Adrenal gland (tissue), 19 donors: ENCODE measurements at regions of chr1 and their contacts with region 1.

Region 1: DNA sequence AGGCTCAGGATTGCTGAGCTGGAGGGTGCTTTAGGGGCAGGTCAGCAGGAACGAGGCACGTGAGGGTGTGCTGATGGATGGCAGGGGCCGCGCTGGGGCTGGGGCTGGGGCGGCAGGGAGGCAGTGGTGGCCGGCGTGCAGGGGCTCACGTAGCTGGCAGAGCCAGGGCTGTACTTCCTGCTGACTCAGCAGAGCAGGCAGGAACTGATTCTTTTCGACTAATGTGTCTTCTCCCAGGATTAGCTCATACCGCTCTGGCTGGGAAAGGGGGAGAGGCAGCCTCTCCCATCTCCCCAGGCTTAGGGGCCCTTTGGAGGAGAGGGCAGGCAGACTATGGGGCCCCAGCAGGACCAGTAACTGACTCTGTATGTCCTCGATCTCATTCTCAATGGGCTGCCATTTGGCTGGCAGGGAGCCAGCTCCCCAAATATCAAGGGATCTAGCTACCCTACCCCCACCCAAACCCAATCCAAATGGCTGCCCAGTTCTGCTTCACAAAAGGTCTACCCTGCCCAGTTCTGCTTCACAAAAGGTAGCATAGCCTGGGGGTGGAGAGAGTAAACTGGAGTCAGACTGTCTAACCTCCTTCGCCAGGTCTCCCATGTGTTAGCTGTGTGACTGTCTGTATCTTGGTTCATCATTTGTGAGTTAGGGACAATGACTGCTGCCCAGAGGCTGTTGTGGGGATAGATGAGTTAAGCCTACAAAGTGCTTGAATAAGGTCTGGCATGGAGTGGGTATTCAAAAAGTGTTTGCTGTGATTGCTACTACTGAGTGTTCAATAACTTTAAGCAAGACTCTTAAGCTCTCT is 100.1 kb upstream of the SLC2A1 start:
- DNase-seq: peak in 4 of 7 donors; percentile 24 to 54 (median 34)
- H3K4me3 ChIP-seq: no peak overlapping the region
- H3K27ac ChIP-seq: peak overlapping the region in 1 of 5 donors; percentile 16
- H3K4me1 ChIP-seq: peaks cover 0 to 9% of the 10 kb centered on the region in 2 donors
- H3K27me3 ChIP-seq: peaks cover 5% of the 10 kb centered on the region
- CTCF ChIP-seq: no peak
- POLR2A ChIP-seq: no peak

Region 2: GRCh38 chr1:42913426-42914091 is 145.2 kb before region 1 on chr1:
- intact Hi-C with region 1: loop called in 1 of 2 experiments (anchors 5 kb)
- DNase-seq: peak in 6 of 7 donors; percentile 42 to 81 (median 67)
- H3K4me3 ChIP-seq: no peak overlapping the region
- H3K27ac ChIP-seq: no peak overlapping the region
- H3K4me1 ChIP-seq: no peaks in the 10 kb centered on the region
- H3K27me3 ChIP-seq: no peaks in the 10 kb centered on the region
- CTCF ChIP-seq: peak; percentile 54 to 94 (median 84)
- POLR2A ChIP-seq: no peak

Region 3: GRCh38 chr1:42941640-42942330 is 117.0 kb before region 1 on chr1:
- intact Hi-C with region 1: no loop called
- DNase-seq: peak; percentile 49 to 89 (median 77)
- H3K4me3 ChIP-seq: no peak overlapping the region
- H3K27ac ChIP-seq: peak overlapping the region in 2 of 5 donors; percentile 45 to 60
- H3K4me1 ChIP-seq: peaks cover 0 to 41% of the 10 kb centered on the region in 2 donors
- H3K27me3 ChIP-seq: no peaks in the 10 kb centered on the region
- CTCF ChIP-seq: no peak
- POLR2A ChIP-seq: no peak

Region 4: GRCh38 chr1:43008115-43009060 is 50.4 kb before region 1 on chr1:
- intact Hi-C with region 1: no loop called
- DNase-seq: peak; percentile 21 to 60 (median 41)
- H3K4me3 ChIP-seq: no peak overlapping the region
- H3K27ac ChIP-seq: peak overlapping the region in 1 of 5 donors; percentile 26
- H3K4me1 ChIP-seq: no peaks in the 10 kb centered on the region
- H3K27me3 ChIP-seq: no peaks in the 10 kb centered on the region
- CTCF ChIP-seq: no peak
- POLR2A ChIP-seq: no peak